SK-N-SH (cell line): ENCODE measurements at regions of chr12 and their contacts with region 1.

Region 1: DNA sequence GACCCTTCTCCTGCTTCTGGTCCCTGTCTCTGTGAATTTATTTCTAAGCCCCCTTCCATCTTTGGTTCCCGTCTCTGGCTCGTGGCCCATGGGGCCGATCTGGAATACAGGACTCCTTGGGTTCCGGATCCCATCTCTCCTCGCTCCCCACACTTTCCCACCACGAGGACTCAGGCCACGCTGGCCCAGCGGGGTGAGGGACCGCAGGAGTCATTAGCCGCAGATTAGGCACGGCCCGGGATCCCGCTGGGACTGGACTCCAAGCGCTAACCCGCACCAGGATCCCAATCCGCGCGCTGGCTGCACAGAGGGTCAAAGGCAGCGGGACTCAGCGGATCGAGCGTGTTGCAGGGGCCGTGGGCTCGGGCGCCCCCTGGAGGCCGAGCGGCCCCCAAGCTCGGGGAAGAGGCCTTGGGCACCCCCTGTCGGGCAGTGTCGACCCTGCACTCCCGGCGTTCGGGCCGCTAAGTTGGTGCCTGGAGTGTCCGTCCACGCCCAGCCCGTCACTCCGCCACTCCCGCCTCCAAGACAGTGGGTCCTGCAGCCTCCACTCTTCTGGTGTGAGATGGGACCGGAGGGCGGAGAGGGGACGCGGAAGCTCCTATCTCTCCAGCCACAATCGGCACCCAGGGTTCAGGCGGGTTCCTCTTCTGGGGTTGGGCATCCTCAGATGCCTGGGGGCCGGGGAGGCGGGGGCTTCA is 9.5 kb downstream of the SHMT2 start:
- DNase-seq: peak; percentile 98
- H3K4me3 ChIP-seq: peak overlapping the region; percentile 58 to 72
- H3K27ac ChIP-seq: peak overlapping the region in 1 of 2 experiments; percentile 64; a peak in 1 of 4 replicates
- H3K4me1 ChIP-seq: peaks cover 23 to 58% of the 10 kb centered on the region in 2 experiments; a peak in 2 of 4 replicates
- H3K27me3 ChIP-seq: peaks cover 19% of the 10 kb centered on the region; the same call in 1 of the 2 replicates
- CTCF ChIP-seq: peak; percentile 99
- EP300 ChIP-seq: no peak
- RAD21 ChIP-seq: peak; percentile 80

Region 2: GRCh38 chr12:57175428-57176138 is 63.4 kb before region 1 on chr12:
- CTCF ChIA-PET with region 1: interaction called, 80 read pairs
- POLR2A ChIA-PET with region 1: interaction called, 4 read pairs
- DNase-seq: peak; percentile 92
- H3K4me3 ChIP-seq: no peak overlapping the region; a peak in 1 of 4 replicates
- H3K27ac ChIP-seq: peak overlapping the region in 1 of 2 experiments; percentile 67; a peak in 2 of 4 replicates
- H3K4me1 ChIP-seq: peaks cover 0 to 16% of the 10 kb centered on the region in 2 experiments; a peak in 1 of 4 replicates
- H3K27me3 ChIP-seq: no peaks in the 10 kb centered on the region
- CTCF ChIP-seq: peak; percentile 88
- EP300 ChIP-seq: no peak
- RAD21 ChIP-seq: peak; percentile 79

Region 3: GRCh38 chr12:57213058-57213715 is 25.8 kb before region 1 on chr12:
- CTCF ChIA-PET with region 1: interaction called, 937 read pairs
- POLR2A ChIA-PET with region 1: interaction called, 4 read pairs
- DNase-seq: peak; percentile 96
- H3K4me3 ChIP-seq: no peak overlapping the region; a peak in 1 of 4 replicates
- H3K27ac ChIP-seq: no peak overlapping the region
- H3K4me1 ChIP-seq: peaks cover 0 to 27% of the 10 kb centered on the region in 2 experiments; a peak in 1 of 4 replicates
- H3K27me3 ChIP-seq: peaks cover 14% of the 10 kb centered on the region
- CTCF ChIP-seq: peak; percentile 92
- EP300 ChIP-seq: no peak
- RAD21 ChIP-seq: peak; percentile 81

Region 4: GRCh38 chr12:57261428-57261865 is 22.4 kb after region 1 on chr12:
- CTCF ChIA-PET with region 1: interaction called, 103 read pairs
- POLR2A ChIA-PET with region 1: no interaction called
- DNase-seq: no peak
- H3K4me3 ChIP-seq: no peak overlapping the region
- H3K27ac ChIP-seq: no peak overlapping the region; a peak in 1 of 4 replicates
- H3K4me1 ChIP-seq: peaks cover 0 to 11% of the 10 kb centered on the region in 2 experiments; a peak in 1 of 4 replicates
- H3K27me3 ChIP-seq: no peaks in the 10 kb centered on the region
- CTCF ChIP-seq: no peak
- EP300 ChIP-seq: no peak
- RAD21 ChIP-seq: no peak

Region 5: DNA sequence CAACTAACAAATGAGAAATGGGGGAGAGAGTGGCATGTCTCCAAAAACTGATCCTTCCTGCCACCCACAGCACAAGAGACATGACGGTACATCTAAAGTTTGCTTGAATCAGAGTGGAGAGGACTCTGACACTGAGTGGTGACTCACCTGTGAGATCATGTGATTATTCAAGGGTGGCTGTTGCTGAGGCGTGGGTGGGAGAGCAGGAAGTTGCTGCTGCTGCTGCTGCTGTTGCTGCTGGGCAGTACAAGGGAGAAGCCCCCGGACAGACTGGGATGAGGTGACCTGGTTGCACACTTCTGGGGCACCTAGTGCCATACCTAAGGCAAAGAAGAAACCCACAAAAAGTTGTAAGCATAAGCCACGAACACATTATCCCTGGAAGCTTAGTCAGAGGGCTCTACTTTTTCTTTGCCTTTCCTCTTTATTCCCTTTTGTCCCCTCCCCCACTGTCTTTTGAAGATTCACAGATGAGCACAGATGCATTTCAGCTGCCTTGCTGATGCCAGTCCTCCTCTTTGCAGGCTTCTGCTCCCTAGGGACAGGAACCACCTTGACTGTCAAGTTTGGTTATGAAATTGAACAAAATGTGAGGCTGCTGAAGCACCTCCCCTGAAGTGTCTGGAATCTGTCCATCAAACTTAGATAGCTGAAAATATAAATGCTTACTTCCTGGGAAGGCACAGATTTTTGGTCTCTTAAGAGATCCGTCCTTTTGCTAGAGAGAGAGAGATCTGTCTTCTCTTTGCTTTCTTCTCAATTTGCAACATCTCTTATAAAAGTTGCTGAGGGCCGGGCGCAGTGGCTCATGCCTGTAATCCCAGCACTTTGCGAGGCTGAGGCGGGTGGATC is 41.4 kb after region 1 on chr12:
- CTCF ChIA-PET with region 1: interaction called, 10 read pairs
- POLR2A ChIA-PET with region 1: no interaction called
- DNase-seq: no peak
- H3K4me3 ChIP-seq: peak overlapping the region in 1 of 2 experiments; percentile 30; a peak in 2 of 4 replicates
- H3K27ac ChIP-seq: peak overlapping the region; percentile 32 to 84
- H3K4me1 ChIP-seq: peaks cover 2 to 13% of the 10 kb centered on the region in 2 experiments; a peak in 2 of 4 replicates
- H3K27me3 ChIP-seq: no peaks in the 10 kb centered on the region
- CTCF ChIP-seq: no peak
- EP300 ChIP-seq: peak in 1 of 2 experiments; percentile 45; a peak in 1 of 4 replicates
- RAD21 ChIP-seq: no peak